HEK293 (cell line): ENCODE measurements at regions of chr20 and their contacts with region 1.

Region 1: DNA sequence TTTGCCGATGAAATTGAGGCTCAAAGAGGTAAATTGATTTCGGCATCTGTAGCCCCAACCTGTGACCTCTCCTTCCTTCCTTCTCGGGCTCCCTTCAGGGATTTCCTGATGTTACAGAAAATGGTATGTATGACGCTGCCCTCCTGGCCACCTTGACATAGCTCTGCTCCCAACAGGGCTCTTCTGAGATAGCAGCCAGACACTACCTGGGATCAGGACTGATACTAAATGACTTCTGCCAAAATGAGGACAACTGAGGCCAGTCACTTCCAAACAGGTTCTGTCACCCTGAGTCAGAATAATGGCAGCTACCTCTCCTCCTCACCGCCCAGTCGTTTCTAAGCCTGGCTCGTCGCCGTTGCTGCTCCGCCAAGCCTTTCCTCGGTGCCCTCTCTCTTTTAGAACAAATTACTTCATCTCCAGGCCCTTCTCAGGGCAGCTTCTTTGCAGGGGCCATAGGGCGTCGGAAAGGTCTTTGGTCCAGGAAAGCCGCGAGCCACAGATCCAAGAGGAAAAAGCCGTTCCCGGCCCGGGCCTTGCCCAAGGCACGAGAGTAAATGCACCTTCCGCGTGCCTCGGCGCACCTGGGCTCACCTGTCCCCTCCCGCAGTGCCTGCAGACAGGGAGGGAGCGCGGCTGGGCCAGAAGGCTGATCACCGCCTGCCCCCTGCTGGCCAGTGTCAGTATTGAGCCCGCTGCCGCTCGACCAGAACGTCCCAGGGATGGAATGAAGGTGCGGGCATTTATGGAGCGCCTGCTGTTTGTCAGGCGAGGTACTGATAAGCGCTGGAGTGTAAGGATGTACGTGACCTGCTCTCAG is 904 bp upstream of the LPIN3 start:
- H3K4me3 ChIP-seq: peak overlapping the region; percentile 42
- H3K27ac ChIP-seq: no peak overlapping the region
- H3K4me1 ChIP-seq: no peaks in the 10 kb centered on the region; the same call in 1 of the 2 replicates
- CTCF ChIP-seq: peak; percentile 97

Region 2: DNA sequence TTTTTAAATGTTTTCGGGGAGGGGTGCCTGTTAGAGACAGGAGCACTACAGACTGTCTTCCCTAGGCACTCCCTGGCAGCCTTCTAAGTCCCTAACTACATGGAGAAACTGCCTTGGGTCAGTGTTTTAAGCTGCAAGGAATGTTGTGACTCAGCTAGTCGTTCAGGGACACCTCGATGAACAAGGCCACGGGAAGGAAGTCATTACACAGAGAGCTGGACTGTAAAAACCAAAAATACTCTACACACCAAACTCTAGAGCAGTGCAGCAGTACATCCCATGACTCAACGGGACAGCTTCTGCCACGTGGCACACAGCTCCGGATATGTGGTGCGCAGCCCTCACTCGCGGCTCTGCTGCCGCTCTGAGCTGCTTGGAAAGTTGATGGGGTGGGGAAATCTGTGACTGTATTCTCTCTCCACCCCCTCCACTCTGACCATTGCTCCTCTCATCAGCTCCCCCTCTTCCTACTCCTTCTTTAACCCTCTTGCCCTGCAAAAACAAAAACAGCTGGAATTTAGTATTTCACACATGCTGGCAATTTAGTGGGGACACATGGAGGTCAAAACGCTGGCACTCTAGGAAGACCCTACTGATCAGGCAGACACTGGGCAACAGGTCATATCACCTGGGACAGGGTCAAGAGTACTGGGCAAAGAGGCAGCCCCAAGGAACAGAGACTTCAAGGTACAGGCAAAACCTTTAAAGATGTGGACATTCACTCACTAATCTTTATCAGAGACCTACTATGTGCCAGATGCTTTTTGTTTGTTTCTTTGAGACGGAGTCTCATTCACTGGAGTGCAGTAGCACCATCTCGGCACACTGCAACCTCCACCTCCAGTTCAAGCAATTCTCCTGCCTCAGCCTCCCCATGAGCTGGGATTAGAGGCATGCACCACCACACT is 10.0 kb before region 1 on chr20:
- CTCF ChIA-PET with region 1: interaction called, 25 read pairs
- POLR2A ChIA-PET with region 1: interaction called, 7 read pairs
- H3K4me3 ChIP-seq: no peak overlapping the region
- H3K27ac ChIP-seq: no peak overlapping the region
- H3K4me1 ChIP-seq: no peaks in the 10 kb centered on the region
- CTCF ChIP-seq: no peak

Region 3: GRCh38 chr20:41413169-41413568 is 73.5 kb after region 1 on chr20:
- CTCF ChIA-PET with region 1: interaction called, 10 read pairs
- POLR2A ChIA-PET with region 1: no interaction called
- H3K4me3 ChIP-seq: no peak overlapping the region
- H3K27ac ChIP-seq: no peak overlapping the region
- H3K4me1 ChIP-seq: no peaks in the 10 kb centered on the region
- CTCF ChIP-seq: no peak